Naive thymus-derived CD4-positive, alpha-beta T cell (primary cell): ENCODE measurements at regions of chr1 and their contacts with region 1.

Region 1: GRCh38 chr1:116934586-116935207 is 25.0 kb downstream of the PTGFRN start:
- DNase-seq: peak in 5 of 9 donors; percentile 34 to 46 (median 39)
- ATAC-seq: peak; percentile 58
- H3K4me3 ChIP-seq: no peak overlapping the region
- H3K4me3 Mint-ChIP-seq: peak overlapping the region in 4 of 10 donors; percentile 4 to 40 (median 19)
- H3K27ac ChIP-seq: no peak overlapping the region
- H3K27ac Mint-ChIP-seq: peak overlapping the region in 8 of 9 donors; percentile 21 to 82 (median 52)
- H3K4me1 ChIP-seq: peaks cover 20 to 22% of the 10 kb centered on the region in 2 donors
- H3K4me1 Mint-ChIP-seq: peaks cover 14 to 28% (median 24%) of the 10 kb centered on the region in 7 donors
- H3K27me3 ChIP-seq: no peaks in the 10 kb centered on the region
- H3K27me3 Mint-ChIP-seq: no peaks in the 10 kb centered on the region

Region 2: DNA sequence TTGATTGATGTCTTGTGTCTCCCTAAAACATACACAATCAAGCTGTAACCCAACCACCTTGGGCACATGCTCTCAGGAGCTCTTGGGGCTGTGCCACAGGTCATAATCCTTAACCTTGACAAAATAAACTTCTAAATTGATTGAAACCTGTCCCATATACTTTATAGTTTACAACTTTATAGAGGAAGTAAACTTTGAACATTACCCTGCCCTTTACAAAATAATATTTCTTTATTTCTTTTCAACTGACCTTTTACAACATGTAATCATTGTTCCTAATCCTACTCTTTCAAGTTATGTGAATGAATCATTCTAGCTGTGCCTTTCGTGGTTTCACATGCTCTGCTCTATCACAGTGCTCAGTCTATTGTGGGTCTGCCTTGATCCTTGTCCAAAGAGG is 679.9 kb before region 1 on chr1:
- CTCF ChIA-PET with region 1: no interaction called
- POLR2A ChIA-PET with region 1: no interaction called
- intact Hi-C with region 1: no loop called
- DNase-seq: no peak
- ATAC-seq: no peak
- H3K4me3 ChIP-seq: no peak overlapping the region
- H3K4me3 Mint-ChIP-seq: no peak overlapping the region
- H3K27ac ChIP-seq: no peak overlapping the region
- H3K27ac Mint-ChIP-seq: peak overlapping the region in 1 of 9 donors; percentile 27
- H3K4me1 ChIP-seq: no peaks in the 10 kb centered on the region
- H3K4me1 Mint-ChIP-seq: peaks cover 2 to 26% (median 7%) of the 10 kb centered on the region in 7 donors
- H3K27me3 ChIP-seq: no peaks in the 10 kb centered on the region
- H3K27me3 Mint-ChIP-seq: peaks cover 0 to 3% (median 0%) of the 10 kb centered on the region in 5 donors

Region 3: DNA sequence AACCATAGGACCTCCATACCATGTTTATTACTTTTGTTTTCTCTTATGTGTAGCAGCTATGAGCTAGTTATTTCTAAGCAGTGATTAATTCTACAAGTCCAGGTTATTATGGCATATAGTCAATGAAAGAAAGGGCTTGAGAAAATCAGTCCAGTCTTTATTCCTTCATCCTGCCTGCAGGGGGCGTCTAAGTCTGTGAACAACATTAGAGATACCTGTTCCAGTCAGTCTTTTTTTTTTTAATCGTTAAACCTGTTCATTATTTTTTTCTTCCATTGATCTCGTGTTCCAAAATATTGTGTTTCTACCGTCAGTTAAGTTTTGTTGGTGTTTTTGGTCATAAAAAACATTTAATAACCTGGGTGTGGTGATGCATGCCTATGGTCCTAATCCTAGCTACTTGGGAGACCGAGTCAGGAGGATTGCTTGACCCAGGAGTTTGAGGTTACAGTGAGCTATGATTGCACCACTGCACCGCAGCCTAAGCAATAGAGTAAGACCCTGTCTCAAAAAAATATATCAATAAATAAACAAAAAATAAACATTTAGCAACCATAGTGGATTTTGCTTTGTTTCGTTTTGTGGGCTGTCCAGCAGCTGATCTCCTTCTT is 209.8 kb before region 1 on chr1:
- CTCF ChIA-PET with region 1: no interaction called
- POLR2A ChIA-PET with region 1: no interaction called
- intact Hi-C with region 1: loop called (anchors 1 kb)
- DNase-seq: peak; percentile 45 to 74 (median 70)
- ATAC-seq: peak; percentile 77
- H3K4me3 ChIP-seq: no peak overlapping the region
- H3K4me3 Mint-ChIP-seq: no peak overlapping the region
- H3K27ac ChIP-seq: no peak overlapping the region
- H3K27ac Mint-ChIP-seq: no peak overlapping the region
- H3K4me1 ChIP-seq: no peaks in the 10 kb centered on the region
- H3K4me1 Mint-ChIP-seq: peaks cover 4 to 27% (median 13%) of the 10 kb centered on the region in 7 donors
- H3K27me3 ChIP-seq: no peaks in the 10 kb centered on the region
- H3K27me3 Mint-ChIP-seq: no peaks in the 10 kb centered on the region

Region 4: DNA sequence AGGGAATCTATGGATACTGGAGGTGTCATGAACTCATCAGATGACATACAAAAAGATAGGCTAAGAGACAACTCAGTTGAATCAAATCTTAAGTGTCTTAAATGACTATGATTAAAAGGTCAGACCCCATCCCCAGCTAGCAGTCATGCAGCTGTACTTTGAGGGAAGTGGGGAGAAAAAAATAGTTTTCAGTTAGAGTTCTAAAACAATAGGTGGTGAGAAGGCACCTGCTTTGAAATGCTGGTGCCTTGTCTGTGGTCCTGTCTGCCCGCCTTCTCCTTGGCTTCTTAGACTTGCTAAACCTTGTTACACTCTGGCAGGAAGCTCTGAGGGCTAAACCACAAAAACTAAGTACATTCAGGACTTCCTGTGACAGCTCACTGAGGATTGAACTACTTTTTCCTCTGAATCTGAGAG is 165.1 kb before region 1 on chr1:
- CTCF ChIA-PET with region 1: no interaction called
- POLR2A ChIA-PET with region 1: no interaction called
- intact Hi-C with region 1: loop called in 1 of 2 experiments (anchors 5 kb)
- DNase-seq: peak in 8 of 9 donors; percentile 60 to 92 (median 86)
- ATAC-seq: peak; percentile 91
- H3K4me3 ChIP-seq: peak overlapping the region; percentile 24
- H3K4me3 Mint-ChIP-seq: peak overlapping the region; percentile 51 to 99 (median 78)
- H3K27ac ChIP-seq: peak overlapping the region; percentile 89
- H3K27ac Mint-ChIP-seq: peak overlapping the region; percentile 84 to 100 (median 97)
- H3K4me1 ChIP-seq: peaks cover 80 to 81% of the 10 kb centered on the region in 2 donors
- H3K4me1 Mint-ChIP-seq: peaks cover 64 to 97% (median 91%) of the 10 kb centered on the region in 7 donors
- H3K27me3 ChIP-seq: no peaks in the 10 kb centered on the region
- H3K27me3 Mint-ChIP-seq: no peaks in the 10 kb centered on the region

Region 5: GRCh38 chr1:116853670-116854402 is 80.9 kb before region 1 on chr1:
- CTCF ChIA-PET with region 1: interaction called, 10 read pairs
- POLR2A ChIA-PET with region 1: no interaction called
- intact Hi-C with region 1: loop called in 1 of 2 experiments (anchors 1 kb)
- DNase-seq: no peak
- ATAC-seq: peak; percentile 48
- H3K4me3 ChIP-seq: no peak overlapping the region
- H3K4me3 Mint-ChIP-seq: no peak overlapping the region
- H3K27ac ChIP-seq: no peak overlapping the region
- H3K27ac Mint-ChIP-seq: peak overlapping the region in 4 of 9 donors; percentile 43 to 87 (median 70)
- H3K4me1 ChIP-seq: peaks cover 0 to 5% of the 10 kb centered on the region in 2 donors
- H3K4me1 Mint-ChIP-seq: peaks cover 13 to 27% (median 17%) of the 10 kb centered on the region in 7 donors
- H3K27me3 ChIP-seq: no peaks in the 10 kb centered on the region
- H3K27me3 Mint-ChIP-seq: no peaks in the 10 kb centered on the region

Region 6: GRCh38 chr1:116915182-116915661 is 19.5 kb before region 1 on chr1:
- CTCF ChIA-PET with region 1: interaction called, 5 read pairs
- POLR2A ChIA-PET with region 1: interaction called, 4 read pairs
- intact Hi-C with region 1: loop called (anchors 2 kb)
- DNase-seq: peak in 4 of 9 donors; percentile 9 to 30 (median 14)
- ATAC-seq: no peak
- H3K4me3 ChIP-seq: peak overlapping the region; percentile 42
- H3K4me3 Mint-ChIP-seq: peak overlapping the region in 7 of 10 donors; percentile 13 to 85 (median 81)
- H3K27ac ChIP-seq: peak overlapping the region; percentile 5
- H3K27ac Mint-ChIP-seq: peak overlapping the region in 7 of 9 donors; percentile 4 to 85 (median 71)
- H3K4me1 ChIP-seq: peaks cover 0 to 34% of the 10 kb centered on the region in 2 donors
- H3K4me1 Mint-ChIP-seq: peaks cover 0 to 16% (median 3%) of the 10 kb centered on the region in 7 donors
- H3K27me3 ChIP-seq: no peaks in the 10 kb centered on the region
- H3K27me3 Mint-ChIP-seq: no peaks in the 10 kb centered on the region

Region 7: GRCh38 chr1:117009132-117009531 is 74.4 kb after region 1 on chr1:
- CTCF ChIA-PET with region 1: no interaction called
- POLR2A ChIA-PET with region 1: interaction called, 3 read pairs
- intact Hi-C with region 1: loop called in 1 of 2 experiments (anchors 5 kb)
- DNase-seq: peak in 6 of 9 donors; percentile 27 to 55 (median 44)
- ATAC-seq: peak; percentile 70
- H3K4me3 ChIP-seq: no peak overlapping the region
- H3K4me3 Mint-ChIP-seq: peak overlapping the region; percentile 42 to 85 (median 73)
- H3K27ac ChIP-seq: peak overlapping the region; percentile 42
- H3K27ac Mint-ChIP-seq: peak overlapping the region; percentile 72 to 96 (median 92)
- H3K4me1 ChIP-seq: peaks cover 0 to 44% of the 10 kb centered on the region in 2 donors
- H3K4me1 Mint-ChIP-seq: peaks cover 31 to 86% (median 65%) of the 10 kb centered on the region in 7 donors
- H3K27me3 ChIP-seq: no peaks in the 10 kb centered on the region
- H3K27me3 Mint-ChIP-seq: no peaks in the 10 kb centered on the region

Region 8: GRCh38 chr1:117051224-117052064 is 116.7 kb after region 1 on chr1:
- CTCF ChIA-PET with region 1: no interaction called
- POLR2A ChIA-PET with region 1: interaction called, 5 read pairs
- intact Hi-C with region 1: loop called (anchors 1 to 2 kb)
- DNase-seq: peak in 6 of 9 donors; percentile 13 to 34 (median 28)
- ATAC-seq: peak; percentile 34
- H3K4me3 ChIP-seq: peak overlapping the region; percentile 26
- H3K4me3 Mint-ChIP-seq: peak overlapping the region; percentile 49 to 94 (median 84)
- H3K27ac ChIP-seq: peak overlapping the region; percentile 54
- H3K27ac Mint-ChIP-seq: peak overlapping the region; percentile 87 to 99 (median 95)
- H3K4me1 ChIP-seq: peaks cover 6 to 45% of the 10 kb centered on the region in 2 donors
- H3K4me1 Mint-ChIP-seq: peaks cover 30 to 66% (median 58%) of the 10 kb centered on the region in 7 donors
- H3K27me3 ChIP-seq: no peaks in the 10 kb centered on the region
- H3K27me3 Mint-ChIP-seq: no peaks in the 10 kb centered on the region

Region 9: GRCh38 chr1:117312225-117313138 is 377.8 kb after region 1 on chr1:
- CTCF ChIA-PET with region 1: no interaction called
- POLR2A ChIA-PET with region 1: no interaction called
- intact Hi-C with region 1: no loop called
- DNase-seq: peak in 6 of 9 donors; percentile 3 to 41 (median 18)
- ATAC-seq: no peak
- H3K4me3 ChIP-seq: no peak overlapping the region
- H3K4me3 Mint-ChIP-seq: no peak overlapping the region
- H3K27ac ChIP-seq: no peak overlapping the region
- H3K27ac Mint-ChIP-seq: no peak overlapping the region
- H3K4me1 ChIP-seq: no peaks in the 10 kb centered on the region
- H3K4me1 Mint-ChIP-seq: peaks cover 0 to 2% (median 0%) of the 10 kb centered on the region in 7 donors
- H3K27me3 ChIP-seq: no peaks in the 10 kb centered on the region
- H3K27me3 Mint-ChIP-seq: peaks cover 0 to 12% (median 0%) of the 10 kb centered on the region in 5 donors